Stomach (tissue), 19 donors: ENCODE measurements at regions of chr5 and their contacts with region 1.

Region 1: DNA sequence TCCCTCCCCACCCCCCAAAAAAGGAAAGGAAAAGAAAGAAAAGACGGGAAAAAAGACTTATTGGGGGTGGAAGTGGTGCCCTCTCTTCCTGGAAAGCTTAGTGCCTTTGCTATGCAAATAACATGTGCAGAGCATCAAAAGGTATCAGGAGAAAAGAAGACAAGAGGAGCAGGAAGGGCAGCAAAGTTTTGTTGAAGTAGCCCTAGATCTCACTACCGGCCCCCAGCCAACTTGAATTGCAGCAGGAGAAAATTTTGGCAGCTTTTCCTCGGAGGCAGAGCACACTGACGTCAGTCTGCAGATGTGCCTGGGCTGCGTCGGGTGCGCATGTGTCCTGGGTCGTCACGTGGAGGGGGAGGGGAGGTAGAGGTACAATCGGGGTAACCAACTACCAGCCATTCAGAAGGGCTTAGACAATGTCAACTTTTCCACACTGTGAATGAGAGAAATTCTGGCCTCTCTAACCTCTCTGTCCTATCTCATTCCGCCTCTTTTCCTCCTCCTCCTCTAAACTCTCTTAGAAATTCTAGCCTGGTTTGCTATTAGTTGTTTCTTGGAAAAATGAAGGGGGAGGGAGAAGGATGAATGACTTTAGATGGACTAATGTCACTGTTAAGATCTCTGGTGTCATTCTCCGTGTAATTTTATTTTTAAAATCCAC is at the start of gene ADAMTS6:
- DNase-seq: peak; percentile 74 to 97
- H3K4me3 ChIP-seq: peak within 1 kb of the TSS; percentile 49 to 62 (median 59)
- H3K27ac ChIP-seq: peak within 1 kb of the TSS; percentile 73 to 93 (median 87)
- H3K4me1 ChIP-seq: peaks cover 8 to 35% (median 24%) of the 10 kb centered on the region in 4 donors
- H3K27me3 ChIP-seq: no peaks in the 10 kb centered on the region
- CTCF ChIP-seq: no peak
- EP300 ChIP-seq: peak; percentile 71
- POLR2A ChIP-seq: no peak
- total RNA-seq, gene ADAMTS6: 0.58 to 43.3 (median 15.0) TPM in 4 of 5 donors, not detected in the other

Region 2: GRCh38 chr5:64634997-64635686 is 846.6 kb before region 1 on chr5:
- intact Hi-C with region 1: loop called (anchors 10 kb)
- DNase-seq: peak in 1 of 2 donors; percentile 59
- H3K4me3 ChIP-seq: no peak overlapping the region
- H3K27ac ChIP-seq: no peak overlapping the region
- H3K4me1 ChIP-seq: no peaks in the 10 kb centered on the region
- H3K27me3 ChIP-seq: peaks cover 0 to 4% (median 0%) of the 10 kb centered on the region in 3 donors
- CTCF ChIP-seq: peak in 5 of 7 experiments; percentile 50 to 77 (median 61)
- EP300 ChIP-seq: no peak
- POLR2A ChIP-seq: no peak

Region 3: GRCh38 chr5:64958757-64959391 is 522.9 kb before region 1 on chr5:
- intact Hi-C with region 1: loop called (anchors 5 kb)
- DNase-seq: peak in 1 of 2 donors; percentile 44
- H3K4me3 ChIP-seq: no peak overlapping the region
- H3K27ac ChIP-seq: no peak overlapping the region
- H3K4me1 ChIP-seq: no peaks in the 10 kb centered on the region
- H3K27me3 ChIP-seq: no peaks in the 10 kb centered on the region
- CTCF ChIP-seq: peak in 4 of 7 experiments; percentile 19 to 37 (median 23)
- EP300 ChIP-seq: no peak
- POLR2A ChIP-seq: no peak

Region 4: DNA sequence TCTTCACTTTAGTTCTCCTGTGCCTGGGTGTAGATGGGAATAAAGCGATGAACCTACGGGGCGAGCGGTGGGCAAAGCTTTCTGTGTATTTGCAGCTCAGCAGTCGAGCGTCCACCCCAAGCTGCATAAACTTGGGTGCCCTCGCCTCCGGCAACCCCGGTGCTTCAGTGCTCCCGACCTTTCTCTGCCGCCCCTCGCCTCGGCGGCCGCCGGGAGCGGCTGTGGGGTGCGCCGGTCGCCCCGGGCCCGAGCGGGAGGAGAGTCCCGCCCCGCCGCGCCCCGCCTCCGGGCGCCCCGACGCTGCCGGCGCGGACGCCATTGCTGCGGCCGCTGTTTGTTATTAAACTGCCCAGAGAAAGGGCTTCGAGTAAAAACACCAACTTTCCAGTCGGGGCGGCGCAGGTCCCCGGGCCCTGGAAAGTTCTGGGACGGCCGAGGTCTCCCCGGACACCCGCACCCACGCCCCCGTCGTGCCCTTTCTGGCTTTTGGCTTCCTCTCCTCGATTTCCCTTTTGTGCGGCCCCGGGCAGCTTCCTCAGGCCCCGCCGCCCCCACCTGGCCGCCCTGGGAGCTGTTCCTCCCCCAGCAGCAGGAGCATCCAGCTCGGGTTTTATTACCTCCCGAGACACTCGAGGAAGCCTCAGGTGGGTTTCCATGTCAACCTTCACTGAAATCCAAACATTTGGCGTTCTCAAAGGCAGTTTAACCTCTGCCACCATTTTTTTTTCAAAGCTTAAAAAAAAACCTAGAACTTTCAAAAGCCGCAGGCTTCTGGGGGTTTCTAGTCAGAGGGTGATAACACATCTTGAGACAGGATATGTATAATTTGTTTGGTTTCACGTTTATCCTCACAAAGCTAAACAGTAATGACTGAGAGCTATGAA is 378.7 kb before region 1 on chr5:
- intact Hi-C with region 1: loop called (anchors 10 kb)
- DNase-seq: peak; percentile 56 to 88
- H3K4me3 ChIP-seq: peak overlapping the region; percentile 54 to 69 (median 58)
- H3K27ac ChIP-seq: peak overlapping the region; percentile 85 to 93 (median 89)
- H3K4me1 ChIP-seq: peaks cover 7 to 26% (median 13%) of the 10 kb centered on the region in 4 donors
- H3K27me3 ChIP-seq: no peaks in the 10 kb centered on the region
- CTCF ChIP-seq: peak in 4 of 7 experiments; percentile 6 to 32 (median 18)
- EP300 ChIP-seq: no peak
- POLR2A ChIP-seq: no peak